A673 (cell line): ENCODE measurements at regions of chr12 and their contacts with region 1.

Region 1: DNA sequence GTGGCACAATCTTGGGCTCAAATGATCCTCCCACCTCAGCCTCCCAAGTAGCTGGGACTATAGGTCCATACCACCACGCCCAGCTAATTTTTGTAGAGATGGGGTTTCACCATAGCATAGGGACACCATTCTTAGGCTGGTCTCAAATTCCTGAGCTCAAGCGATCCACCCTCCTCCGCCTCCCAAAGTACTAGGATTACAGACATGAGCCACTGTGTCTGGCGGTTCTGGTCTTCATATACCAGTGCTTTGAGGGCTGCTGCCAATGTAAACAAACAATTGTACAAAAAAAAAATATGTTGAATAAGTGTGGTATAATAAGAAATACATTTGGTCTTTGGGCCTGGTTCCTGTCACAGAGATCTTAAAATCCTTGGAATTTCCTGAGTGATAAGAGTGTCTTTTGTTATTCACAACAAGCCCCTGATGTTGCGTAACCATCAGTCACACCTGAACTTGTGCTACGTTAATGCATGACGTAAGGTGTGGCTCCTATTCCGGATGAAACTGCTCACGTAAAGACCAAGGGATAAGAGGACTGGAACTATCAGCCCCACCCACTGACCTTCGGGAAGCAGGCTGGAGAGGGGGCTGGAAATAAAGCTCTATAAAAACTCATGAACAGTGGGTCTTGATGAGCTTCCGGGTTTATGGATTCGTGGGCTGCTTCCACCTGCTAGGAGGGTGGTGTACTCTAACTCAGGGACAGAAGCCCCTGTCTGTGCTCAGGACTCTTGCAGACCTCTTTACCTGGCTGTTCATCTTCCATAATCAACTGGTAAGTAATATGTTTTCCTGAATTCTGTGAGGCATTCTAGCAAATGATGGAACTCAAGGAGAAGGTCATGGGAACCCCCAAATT is 16.5 kb upstream of the RIMKLB start:
- DNase-seq: no peak
- H3K4me3 ChIP-seq: no peak overlapping the region
- H3K27ac ChIP-seq: no peak overlapping the region
- H3K4me1 ChIP-seq: peaks cover 18% of the 10 kb centered on the region
- H3K27me3 ChIP-seq: no peaks in the 10 kb centered on the region
- CTCF ChIP-seq: no peak

Region 2: GRCh38 chr12:8890313-8891085 is 209.2 kb after region 1 on chr12:
- CTCF ChIA-PET with region 1: interaction called, 13 read pairs
- POLR2A ChIA-PET with region 1: no interaction called
- intact Hi-C with region 1: loop called (anchors 1 kb)
- DNase-seq: peak; percentile 72
- H3K4me3 ChIP-seq: peak overlapping the region; percentile 43
- H3K27ac ChIP-seq: no peak overlapping the region
- H3K4me1 ChIP-seq: no peaks in the 10 kb centered on the region
- H3K27me3 ChIP-seq: no peaks in the 10 kb centered on the region
- CTCF ChIP-seq: peak; percentile 94

Region 3: GRCh38 chr12:9039397-9039977 is 358.2 kb after region 1 on chr12:
- CTCF ChIA-PET with region 1: interaction called, 4 read pairs
- POLR2A ChIA-PET with region 1: no interaction called
- intact Hi-C with region 1: loop called (anchors 5 kb)
- DNase-seq: peak; percentile 69
- H3K4me3 ChIP-seq: no peak overlapping the region
- H3K27ac ChIP-seq: no peak overlapping the region
- H3K4me1 ChIP-seq: no peaks in the 10 kb centered on the region
- H3K27me3 ChIP-seq: no peaks in the 10 kb centered on the region
- CTCF ChIP-seq: peak; percentile 80

Region 4: DNA sequence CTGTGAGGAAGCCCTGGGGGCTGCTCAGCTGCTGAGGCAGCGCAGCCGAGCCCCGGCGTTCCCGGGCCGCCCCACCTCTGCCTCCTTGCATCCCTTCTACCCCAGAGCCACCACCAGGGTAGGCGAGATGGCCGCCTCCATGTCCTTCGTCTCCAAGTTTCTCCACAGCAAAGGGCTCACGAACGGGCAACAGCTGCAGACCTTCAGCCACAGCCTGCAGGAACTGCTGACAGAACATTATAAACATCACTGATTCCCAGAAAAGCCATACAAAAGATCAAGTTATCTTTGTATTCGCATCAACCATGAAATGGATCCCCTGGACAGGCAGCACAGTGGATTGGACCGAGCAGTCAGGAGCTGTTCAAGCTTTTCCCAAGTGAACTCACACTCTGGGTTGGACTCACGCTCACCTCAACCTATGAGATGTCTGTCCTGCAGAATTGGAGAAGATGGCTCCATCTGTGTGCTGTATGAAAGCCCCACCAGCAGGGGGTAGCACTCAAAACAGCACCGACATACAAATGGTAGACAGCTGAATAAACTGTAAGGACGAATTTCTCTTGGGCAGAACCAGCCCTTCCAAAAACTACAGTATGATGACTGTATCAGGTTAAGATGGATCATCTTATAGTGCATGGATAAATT is 453.8 kb after region 1 on chr12:
- CTCF ChIA-PET with region 1: no interaction called
- POLR2A ChIA-PET with region 1: no interaction called
- intact Hi-C with region 1: no loop called
- DNase-seq: no peak
- H3K4me3 ChIP-seq: no peak overlapping the region
- H3K27ac ChIP-seq: no peak overlapping the region
- H3K4me1 ChIP-seq: no peaks in the 10 kb centered on the region
- H3K27me3 ChIP-seq: no peaks in the 10 kb centered on the region
- CTCF ChIP-seq: peak; percentile 32